ENCODE measurements at regions of chr1 and their contacts with region 1.

Region 1: DNA sequence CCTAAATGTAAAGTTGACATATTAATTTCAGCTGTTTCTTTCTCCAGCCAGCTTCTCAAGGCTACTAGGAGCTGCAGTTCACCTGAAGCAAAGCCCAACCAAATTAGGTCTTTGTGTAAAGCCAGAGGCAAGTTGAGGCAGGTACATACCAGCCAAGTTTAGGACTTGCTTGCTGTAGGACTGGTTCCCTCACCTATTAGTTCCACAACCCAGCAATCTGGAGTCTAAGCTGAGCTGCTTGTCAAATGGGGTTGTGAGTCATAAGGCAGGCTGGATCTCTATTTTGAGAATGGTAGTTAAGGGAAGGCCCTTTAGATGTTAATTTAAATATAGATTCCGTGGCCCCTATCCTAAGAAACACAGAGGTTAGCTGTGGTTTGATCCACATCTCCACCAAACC is 7.6 kb upstream of the FLG2 start:
- DNase-seq: peak; percentile 91
- H3K4me3 ChIP-seq: no peak overlapping the region
- H3K27ac ChIP-seq: no peak overlapping the region
- H3K4me1 ChIP-seq: peaks cover 9% of the 10 kb centered on the region
- H3K27me3 ChIP-seq: no peaks in the 10 kb centered on the region
- CTCF ChIP-seq: no peak

Region 2: DNA sequence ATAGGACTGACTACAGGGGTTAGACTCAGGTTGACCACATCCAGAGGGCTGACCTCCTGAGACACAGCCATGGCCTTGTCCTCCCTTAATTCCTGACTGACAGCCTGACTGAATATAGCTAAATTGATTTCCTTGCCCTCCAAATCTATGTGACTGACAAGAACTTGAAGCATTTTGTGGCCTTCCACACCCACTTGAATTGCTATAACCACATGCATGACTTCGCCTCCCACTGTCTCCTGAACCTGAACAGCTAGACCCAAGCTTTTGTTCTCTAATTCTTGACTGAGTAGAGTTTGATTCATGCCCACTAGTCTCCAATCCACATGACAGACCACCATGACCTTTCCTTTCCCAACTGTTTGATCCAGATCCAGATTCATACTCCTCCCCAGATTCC is 10.7 kb before region 1 on chr1:
- CTCF ChIA-PET with region 1: no interaction called
- dilution Hi-C with region 1: no loop called
- in situ Hi-C with region 1: no loop called
- intact Hi-C with region 1: loop called (anchors 1 kb)
- DNase-seq: no peak
- H3K4me3 ChIP-seq: no peak overlapping the region
- H3K27ac ChIP-seq: no peak overlapping the region
- H3K4me1 ChIP-seq: peaks cover 3% of the 10 kb centered on the region
- H3K27me3 ChIP-seq: peaks cover 2% of the 10 kb centered on the region
- CTCF ChIP-seq: no peak

Region 3: DNA sequence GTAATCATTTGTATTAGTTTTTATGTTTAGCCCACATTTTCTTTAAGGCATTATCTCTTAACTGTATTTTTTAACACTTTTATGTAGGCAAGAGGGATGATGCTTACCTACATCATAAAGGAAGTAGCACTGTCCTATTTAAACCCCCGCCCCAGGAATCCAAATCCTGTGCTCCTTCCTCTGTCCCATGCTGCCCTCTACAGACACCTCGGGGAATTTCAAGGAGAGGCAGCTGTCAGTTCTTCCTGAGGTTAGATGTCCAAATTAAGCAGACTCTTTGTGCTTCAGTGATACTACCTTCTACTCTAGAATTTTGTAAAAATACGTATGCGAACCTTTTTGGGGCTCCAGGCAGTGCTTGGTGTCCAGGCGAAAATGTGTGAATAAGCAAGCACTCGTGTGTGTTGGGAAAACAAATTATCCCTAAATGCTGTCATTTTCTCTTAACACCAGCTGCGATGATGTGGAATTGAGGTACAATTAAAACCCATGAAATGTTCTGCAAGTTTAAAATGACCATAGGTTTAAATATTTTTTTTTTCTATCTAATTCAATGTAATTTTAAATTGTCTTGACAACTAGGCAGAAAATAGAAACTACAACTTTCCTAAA is 166.0 kb after region 1 on chr1:
- CTCF ChIA-PET with region 1: no interaction called
- dilution Hi-C with region 1: no loop called
- in situ Hi-C with region 1: no loop called
- intact Hi-C with region 1: no loop called
- DNase-seq: peak; percentile 50
- H3K4me3 ChIP-seq: no peak overlapping the region
- H3K27ac ChIP-seq: no peak overlapping the region
- H3K4me1 ChIP-seq: no peaks in the 10 kb centered on the region
- H3K27me3 ChIP-seq: no peaks in the 10 kb centered on the region
- CTCF ChIP-seq: peak; percentile 90 to 94

Measured in mammary epithelial cell (primary cell).